WTC11 (cell line): ENCODE measurements at regions of chr3 and their contacts with region 1.

Region 1: GRCh38 chr3:146189519-146190173 is 28.7 kb upstream of the PLOD2 start:
- DNase-seq: no peak
- ATAC-seq: peak; percentile 93
- H3K4me3 Mint-ChIP-seq: no peak overlapping the region
- H3K27ac Mint-ChIP-seq: no peak overlapping the region
- H3K4me1 Mint-ChIP-seq: no peaks in the 10 kb centered on the region; the same call in 1 of the 2 replicates
- H3K27me3 Mint-ChIP-seq: no peaks in the 10 kb centered on the region
- CTCF ChIP-seq: peak; percentile 79

Region 2: DNA sequence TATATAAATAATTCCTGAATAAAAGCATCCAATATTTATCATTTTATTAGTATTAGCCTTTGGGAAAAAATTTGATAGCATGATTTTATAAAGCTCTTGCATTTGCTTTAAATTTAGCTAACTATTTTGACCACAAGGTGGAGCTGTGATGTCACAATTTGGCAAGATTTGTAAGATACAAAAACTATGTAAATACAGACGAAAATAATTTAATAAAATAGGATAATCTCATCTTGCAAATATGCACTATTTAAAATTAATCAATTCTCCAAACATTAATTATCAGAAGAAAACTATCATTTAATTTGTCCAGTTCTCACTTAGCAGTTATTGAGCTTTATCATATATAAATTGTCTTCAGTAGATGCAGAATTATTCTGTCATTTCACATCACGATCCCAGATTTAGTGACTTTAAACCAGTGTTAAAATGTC is 124.1 kb before region 1 on chr3:
- CTCF ChIA-PET with region 1: interaction called, 129 read pairs
- POLR2A ChIA-PET with region 1: no interaction called
- DNase-seq: no peak
- ATAC-seq: no peak
- H3K4me3 Mint-ChIP-seq: no peak overlapping the region
- H3K27ac Mint-ChIP-seq: no peak overlapping the region
- H3K4me1 Mint-ChIP-seq: no peaks in the 10 kb centered on the region
- H3K27me3 Mint-ChIP-seq: no peaks in the 10 kb centered on the region
- CTCF ChIP-seq: peak; percentile 66

Region 3: GRCh38 chr3:146160964-146161662 is 28.5 kb before region 1 on chr3 and contains the start of gene PLOD2:
- CTCF ChIA-PET with region 1: interaction called, 12 read pairs
- POLR2A ChIA-PET with region 1: no interaction called
- DNase-seq: peak; percentile 74
- ATAC-seq: peak; percentile 75
- H3K4me3 Mint-ChIP-seq: peak within 1 kb of the TSS; percentile 83
- H3K27ac Mint-ChIP-seq: peak within 1 kb of the TSS; percentile 97
- H3K4me1 Mint-ChIP-seq: peaks cover 68% of the 10 kb centered on the region
- H3K27me3 Mint-ChIP-seq: peaks cover 16% of the 10 kb centered on the region
- CTCF ChIP-seq: no peak
- total RNA-seq, gene PLOD2: 36.6 to 40.7 TPM (median 39.3 TPM) in 3 replicates

Region 4: DNA sequence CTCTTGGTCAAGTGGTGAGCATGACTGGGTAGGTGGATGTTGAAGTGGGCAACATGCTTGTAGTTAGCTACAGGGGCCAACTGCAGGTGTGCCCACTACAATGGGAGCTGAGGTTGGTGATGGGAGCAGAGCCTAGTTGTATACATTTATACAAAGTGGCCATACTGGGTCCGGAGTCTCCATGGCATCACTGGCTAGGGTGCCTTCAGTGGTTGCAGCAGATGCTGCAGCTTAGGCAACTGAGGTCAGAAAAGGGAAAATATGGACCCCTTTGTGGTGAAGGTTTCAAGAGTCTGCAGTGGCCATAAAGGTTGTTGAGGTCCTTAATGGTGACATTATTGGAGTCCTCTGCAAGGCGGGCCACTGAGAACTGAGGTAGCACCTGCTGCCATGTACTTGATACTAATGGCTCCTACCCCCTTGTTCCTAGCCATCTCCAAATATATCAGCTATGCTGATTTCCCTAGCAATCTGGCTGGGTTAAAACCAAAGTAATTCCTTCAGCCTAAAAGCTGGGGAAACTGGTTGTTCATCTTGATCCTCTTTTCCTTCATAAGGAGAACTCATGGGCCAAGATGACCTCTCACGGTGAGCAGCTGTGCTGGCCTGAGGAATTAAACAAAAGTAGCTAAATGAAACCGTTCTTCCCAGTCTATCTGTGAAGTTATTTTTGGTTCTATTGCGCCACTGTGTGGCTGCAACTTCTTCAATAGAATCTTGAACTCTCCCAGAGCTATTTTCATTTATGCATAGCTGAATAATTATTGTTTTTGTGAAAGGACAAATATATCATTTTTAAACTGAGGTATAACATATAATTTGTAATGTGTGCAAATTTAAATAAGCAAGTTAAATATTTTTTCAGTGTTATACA is 137.3 kb after region 1 on chr3:
- CTCF ChIA-PET with region 1: interaction called, 100 read pairs
- POLR2A ChIA-PET with region 1: no interaction called
- DNase-seq: no peak
- ATAC-seq: peak; percentile 66
- H3K4me3 Mint-ChIP-seq: no peak overlapping the region
- H3K27ac Mint-ChIP-seq: no peak overlapping the region
- H3K4me1 Mint-ChIP-seq: no peaks in the 10 kb centered on the region
- H3K27me3 Mint-ChIP-seq: no peaks in the 10 kb centered on the region
- CTCF ChIP-seq: 0 out of 2 replicates have a peak, but pooled peaks have one; percentile 22

Region 5: GRCh38 chr3:146544002-146544928 is 354.6 kb after region 1 on chr3 and contains the start of gene PLSCR1:
- CTCF ChIA-PET with region 1: no interaction called
- POLR2A ChIA-PET with region 1: no interaction called
- DNase-seq: peak; percentile 86
- ATAC-seq: peak; percentile 91
- H3K4me3 Mint-ChIP-seq: peak within 1 kb of the TSS; percentile 86
- H3K27ac Mint-ChIP-seq: peak within 1 kb of the TSS; percentile 77; the same call in 1 of the 2 replicates
- H3K4me1 Mint-ChIP-seq: peaks cover 36% of the 10 kb centered on the region
- H3K27me3 Mint-ChIP-seq: peaks cover 7% of the 10 kb centered on the region
- CTCF ChIP-seq: no peak
- total RNA-seq, gene PLSCR1: 44.4 to 58.1 TPM (median 48.1 TPM) in 3 replicates

Region 6: DNA sequence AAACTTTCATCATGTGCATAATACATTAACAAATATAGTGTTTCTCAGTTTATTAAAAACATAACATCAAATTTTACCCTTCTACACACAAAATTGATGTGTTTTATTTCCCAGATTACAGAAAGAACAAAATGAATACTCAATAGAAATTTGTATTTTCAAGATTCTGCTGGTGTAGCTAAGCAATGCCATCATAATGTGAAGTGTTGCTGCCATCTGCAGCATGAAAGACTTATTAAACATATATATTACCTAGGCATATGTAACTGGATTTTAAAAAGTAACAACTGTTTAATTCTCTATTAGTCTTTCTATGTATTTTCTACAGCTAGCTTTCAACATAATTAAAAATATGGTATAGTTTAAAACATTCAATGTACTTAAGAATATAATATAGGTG is 388.0 kb after region 1 on chr3:
- CTCF ChIA-PET with region 1: interaction called, 41 read pairs
- POLR2A ChIA-PET with region 1: no interaction called
- DNase-seq: no peak
- ATAC-seq: no peak
- H3K4me3 Mint-ChIP-seq: no peak overlapping the region
- H3K27ac Mint-ChIP-seq: no peak overlapping the region
- H3K4me1 Mint-ChIP-seq: peaks cover 21% of the 10 kb centered on the region
- H3K27me3 Mint-ChIP-seq: no peaks in the 10 kb centered on the region
- CTCF ChIP-seq: no peak